HEK293T (cell line): ENCODE measurements at regions of chr9 and their contacts with region 1.

Region 1: GRCh38 chr9:12818431-12819000 is 43.7 kb downstream of the LURAP1L start:
- DNase-seq: no peak

Region 2: GRCh38 chr9:12775679-12776512 is 42.6 kb before region 1 on chr9:
- CTCF ChIA-PET with region 1: interaction called, 3 read pairs
- POLR2A ChIA-PET with region 1: interaction called, 12 read pairs
- DNase-seq: peak; percentile 62